ENCODE measurements at regions of chr11 and their contacts with region 1.

Region 1: GRCh38 chr11:16820324-16821092 is 82.1 kb downstream of the C11orf58 start:
- ATAC-seq: peak; percentile 65 to 94 (median 72)
- H3K4me3 ChIP-seq: no peak overlapping the region
- H3K27ac ChIP-seq: no peak overlapping the region
- H3K4me1 ChIP-seq: peaks cover 11% of the 10 kb centered on the region in 2 donors

Region 2: DNA sequence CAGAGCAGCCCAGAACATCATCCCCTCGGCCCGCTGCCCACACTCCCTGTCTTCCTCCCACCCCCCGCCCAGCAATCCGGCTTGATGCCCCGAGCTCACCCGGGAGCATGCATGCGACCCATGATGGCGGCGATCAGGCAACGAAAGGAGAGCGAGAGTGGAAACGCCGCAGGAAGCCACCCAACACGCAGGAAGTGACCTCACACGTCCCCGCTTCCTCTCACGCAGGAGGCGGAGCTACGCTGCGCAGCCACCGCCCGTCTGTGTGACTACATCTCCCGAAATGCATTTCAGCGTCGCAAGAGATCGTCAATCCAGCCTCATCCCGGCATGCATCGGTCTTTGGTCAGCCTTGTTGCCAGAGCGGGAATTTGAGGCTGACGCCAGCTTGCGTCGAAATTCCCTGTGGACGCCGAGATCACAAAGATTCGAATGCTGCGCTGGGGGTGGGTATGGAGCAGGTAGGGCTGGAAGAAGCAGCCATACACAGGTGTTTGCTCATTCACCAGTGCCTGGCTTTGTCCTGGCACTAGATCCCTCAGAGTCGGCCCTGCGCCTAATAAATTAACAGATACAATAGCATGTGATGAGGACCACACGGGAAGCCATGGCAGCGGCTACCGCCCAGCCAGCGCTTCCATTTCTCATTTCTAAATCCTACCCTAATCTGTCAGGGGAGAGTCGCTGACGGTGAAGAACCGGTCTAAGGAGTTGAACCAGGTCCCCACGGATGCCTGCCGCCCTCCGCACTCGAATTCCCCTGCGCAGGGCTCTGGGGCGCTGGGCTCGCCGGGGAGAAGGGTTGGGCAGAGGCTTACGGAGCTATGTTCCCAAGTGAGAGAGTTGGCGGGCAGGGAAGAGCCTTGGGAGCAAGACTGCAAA is 257.3 kb after region 1 on chr11 and contains the start of gene RPS13:
- in situ Hi-C with region 1: loop called in 1 of 9 experiments (anchors 25 kb)
- ATAC-seq: peak; percentile 87 to 97 (median 96)
- H3K4me3 ChIP-seq: peak within 1 kb of the TSS; percentile 72 to 89 (median 86)
- H3K27ac ChIP-seq: peak within 1 kb of the TSS; percentile 92 to 96
- H3K4me1 ChIP-seq: peaks cover 12 to 18% of the 10 kb centered on the region in 2 donors
- total RNA-seq, gene RPS13: 899 to 2,683 (median 1,773) TPM

Measured in motor neuron (in vitro differentiated cells).